ENCODE measurements at regions of chr15 and their contacts with region 1.

Region 1: GRCh38 chr15:40338041-40338657 is 2.6 kb downstream of the CCDC9B start:
- DNase-seq: peak; percentile 69 to 72 (median 71)
- H3K4me3 ChIP-seq: no peak overlapping the region
- H3K4me3 Mint-ChIP-seq: peak overlapping the region in 1 of 8 donors; percentile 46
- H3K27ac ChIP-seq: no peak overlapping the region
- H3K27ac Mint-ChIP-seq: no peak overlapping the region
- H3K4me1 ChIP-seq: peaks cover 15% of the 10 kb centered on the region
- H3K4me1 Mint-ChIP-seq: peaks cover 7 to 16% (median 9%) of the 10 kb centered on the region in 4 donors
- H3K27me3 ChIP-seq: no peaks in the 10 kb centered on the region
- H3K27me3 Mint-ChIP-seq: peaks cover 0 to 2% of the 10 kb centered on the region in 2 donors

Region 2: DNA sequence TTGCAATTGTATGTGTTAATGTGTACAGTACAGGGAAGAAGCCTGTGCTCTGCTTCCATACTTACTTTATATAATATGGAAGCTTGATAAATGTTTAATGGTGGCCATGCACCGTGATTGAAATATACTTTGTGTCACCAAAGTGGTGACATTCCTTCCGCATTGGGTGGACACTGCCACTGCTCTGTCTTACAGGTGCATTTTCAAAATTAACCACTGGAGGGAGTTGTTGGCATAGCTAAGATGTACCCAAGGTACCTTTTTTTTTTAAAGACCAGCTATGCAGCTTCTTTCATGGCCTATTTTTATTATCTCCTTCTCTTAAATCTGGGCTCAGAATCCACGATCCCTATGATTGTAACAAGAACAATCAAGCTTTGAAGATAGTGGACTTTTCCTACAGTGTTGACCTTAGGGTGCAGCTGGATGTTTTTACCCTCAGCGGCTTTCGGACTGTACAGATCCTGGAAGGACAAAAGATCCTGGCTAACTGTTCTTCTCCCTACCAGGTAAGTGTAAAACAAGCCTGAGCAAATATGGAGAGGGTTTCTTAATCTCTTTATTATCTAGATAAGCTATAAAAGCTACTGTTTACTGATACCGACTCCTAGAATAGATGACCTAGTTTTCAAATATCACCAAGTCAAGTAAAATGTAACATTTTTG is 120.9 kb before region 1 on chr15:
- CTCF ChIA-PET with region 1: interaction called, 22 read pairs
- POLR2A ChIA-PET with region 1: no interaction called
- intact Hi-C with region 1: loop called (anchors 5 kb)
- DNase-seq: peak; percentile 56 to 74 (median 69)
- H3K4me3 ChIP-seq: no peak overlapping the region
- H3K4me3 Mint-ChIP-seq: no peak overlapping the region
- H3K27ac ChIP-seq: no peak overlapping the region
- H3K27ac Mint-ChIP-seq: no peak overlapping the region
- H3K4me1 ChIP-seq: no peaks in the 10 kb centered on the region
- H3K4me1 Mint-ChIP-seq: no peaks in the 10 kb centered on the region
- H3K27me3 ChIP-seq: no peaks in the 10 kb centered on the region
- H3K27me3 Mint-ChIP-seq: no peaks in the 10 kb centered on the region

Region 3: GRCh38 chr15:40282144-40282868 is 55.8 kb before region 1 on chr15:
- CTCF ChIA-PET with region 1: interaction called, 324 read pairs
- POLR2A ChIA-PET with region 1: interaction called, 5 read pairs
- intact Hi-C with region 1: loop called (anchors 1 kb)
- DNase-seq: peak; percentile 42 to 62 (median 53)
- H3K4me3 ChIP-seq: peak overlapping the region in 1 of 2 donors; percentile 57
- H3K4me3 Mint-ChIP-seq: peak overlapping the region; percentile 36 to 78 (median 58)
- H3K27ac ChIP-seq: no peak overlapping the region
- H3K27ac Mint-ChIP-seq: no peak overlapping the region
- H3K4me1 ChIP-seq: peaks cover 13% of the 10 kb centered on the region
- H3K4me1 Mint-ChIP-seq: peaks cover 2 to 9% (median 4%) of the 10 kb centered on the region in 4 donors
- H3K27me3 ChIP-seq: peaks cover 6% of the 10 kb centered on the region
- H3K27me3 Mint-ChIP-seq: peaks cover 11 to 22% of the 10 kb centered on the region in 2 donors

Region 4: DNA sequence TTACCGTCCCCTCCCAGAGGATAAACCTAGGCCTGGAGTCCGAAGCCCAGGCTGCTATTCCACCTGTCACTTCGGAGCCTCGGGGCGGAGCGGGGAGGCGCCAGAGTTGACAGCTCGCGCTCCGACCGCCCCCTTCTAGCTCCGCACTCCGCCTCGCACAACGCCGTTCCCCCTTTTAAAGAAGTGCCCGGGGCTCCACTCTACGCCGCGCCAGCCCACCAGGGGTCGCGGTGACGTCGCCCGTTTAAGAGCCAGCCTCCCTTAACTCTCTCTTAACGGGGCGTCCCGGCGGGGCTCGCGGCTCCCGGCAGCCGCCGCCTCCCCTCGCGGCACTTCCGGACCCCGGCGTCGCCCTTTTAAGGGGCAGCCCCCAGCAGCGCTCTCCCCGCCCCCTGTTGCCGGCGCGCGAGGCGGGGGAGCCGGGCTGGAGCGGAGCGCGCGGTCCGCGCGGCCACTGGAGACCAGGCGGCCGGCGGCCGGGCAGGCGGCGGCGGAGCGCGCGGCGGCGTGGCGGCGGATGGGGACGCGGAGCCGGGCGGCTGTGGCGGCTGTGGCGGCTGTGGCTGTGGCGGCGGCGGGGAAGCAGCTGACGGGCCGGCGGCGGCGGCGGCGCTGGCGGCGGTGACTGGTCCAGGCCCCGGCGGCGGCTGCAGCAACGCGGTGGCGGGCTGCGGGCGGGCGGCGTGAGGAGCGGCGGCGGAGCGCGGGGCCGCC is 14.8 kb before region 1 on chr15 and contains the start of gene INAFM2:
- CTCF ChIA-PET with region 1: interaction called, 634 read pairs
- POLR2A ChIA-PET with region 1: interaction called, 10 read pairs
- intact Hi-C with region 1: loop called (anchors 1 kb)
- DNase-seq: peak; percentile 88 to 90 (median 89)
- H3K4me3 ChIP-seq: peak within 1 kb of the TSS in 1 of 2 donors; percentile 56
- H3K4me3 Mint-ChIP-seq: peak within 1 kb of the TSS; percentile 79 to 89 (median 86)
- H3K27ac ChIP-seq: peak within 1 kb of the TSS; percentile 29
- H3K27ac Mint-ChIP-seq: peak within 1 kb of the TSS; percentile 36 to 93 (median 88)
- H3K4me1 ChIP-seq: peaks cover 22% of the 10 kb centered on the region
- H3K4me1 Mint-ChIP-seq: peaks cover 16 to 35% (median 25%) of the 10 kb centered on the region in 4 donors
- H3K27me3 ChIP-seq: no peaks in the 10 kb centered on the region
- H3K27me3 Mint-ChIP-seq: peaks cover 0 to 7% of the 10 kb centered on the region in 2 donors
- total RNA-seq, gene INAFM2: 7.2 to 7.5 TPM

Region 5: DNA sequence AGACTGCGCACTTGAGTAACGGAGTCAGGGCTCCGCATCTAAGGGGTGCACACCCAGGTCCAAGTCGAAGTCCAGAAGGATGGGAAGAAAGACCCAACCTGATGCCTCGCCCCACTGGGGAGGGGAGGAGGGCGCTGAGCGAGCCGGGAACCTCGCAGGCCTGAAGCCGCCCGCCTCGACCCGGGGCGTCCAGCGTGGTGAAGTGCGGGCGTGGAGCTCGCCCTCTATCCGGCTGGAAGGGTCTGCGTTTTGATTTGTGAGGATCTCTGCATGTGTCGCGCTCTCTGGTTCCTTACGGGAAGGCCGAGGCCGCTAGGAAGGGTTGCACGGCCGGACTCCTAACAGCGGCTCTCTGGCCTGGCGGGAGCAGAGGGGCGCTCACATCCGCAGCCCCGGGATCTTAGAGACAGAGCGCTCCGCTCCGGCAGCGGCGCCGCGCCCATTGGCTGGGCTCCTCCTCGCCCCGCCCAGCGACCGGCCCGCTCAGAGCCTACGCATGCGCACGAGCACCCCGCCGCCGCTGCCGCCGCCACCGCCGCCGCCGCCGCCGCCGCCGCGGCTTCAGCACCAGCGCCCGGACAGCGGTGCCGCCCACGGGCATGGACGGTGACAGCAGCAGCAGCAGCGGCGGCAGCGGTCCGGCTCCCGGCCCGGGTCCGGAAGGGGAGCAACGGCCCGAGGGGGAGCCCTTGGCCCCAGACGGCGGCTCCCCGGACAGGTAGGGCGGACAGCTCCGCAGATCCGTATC is 19.7 kb after region 1 on chr15 and contains the start of gene DISP2:
- CTCF ChIA-PET with region 1: interaction called, 15 read pairs
- POLR2A ChIA-PET with region 1: no interaction called
- intact Hi-C with region 1: no loop called
- DNase-seq: peak; percentile 85 to 96 (median 90)
- H3K4me3 ChIP-seq: peak within 1 kb of the TSS; percentile 29 to 58
- H3K4me3 Mint-ChIP-seq: peak within 1 kb of the TSS; percentile 80 to 87 (median 83)
- H3K27ac ChIP-seq: no peak within 1 kb of the TSS
- H3K27ac Mint-ChIP-seq: peak within 1 kb of the TSS in 2 of 7 donors; percentile 68 to 82
- H3K4me1 ChIP-seq: peaks cover 13% of the 10 kb centered on the region
- H3K4me1 Mint-ChIP-seq: peaks cover 5 to 21% (median 7%) of the 10 kb centered on the region in 4 donors
- H3K27me3 ChIP-seq: no peaks in the 10 kb centered on the region
- H3K27me3 Mint-ChIP-seq: peaks cover 0 to 4% of the 10 kb centered on the region in 2 donors
- total RNA-seq, gene DISP2: 0.03 to 0.23 TPM

Region 6: GRCh38 chr15:40421246-40422157 is 83.4 kb after region 1 on chr15:
- CTCF ChIA-PET with region 1: interaction called, 235 read pairs
- POLR2A ChIA-PET with region 1: interaction called, 3 read pairs
- intact Hi-C with region 1: no loop called
- DNase-seq: peak; percentile 73 to 77 (median 74)
- H3K4me3 ChIP-seq: no peak overlapping the region
- H3K4me3 Mint-ChIP-seq: no peak overlapping the region
- H3K27ac ChIP-seq: no peak overlapping the region
- H3K27ac Mint-ChIP-seq: peak overlapping the region in 1 of 7 donors; percentile 40
- H3K4me1 ChIP-seq: peaks cover 8% of the 10 kb centered on the region
- H3K4me1 Mint-ChIP-seq: peaks cover 0 to 5% (median 0%) of the 10 kb centered on the region in 4 donors
- H3K27me3 ChIP-seq: no peaks in the 10 kb centered on the region
- H3K27me3 Mint-ChIP-seq: no peaks in the 10 kb centered on the region